Calu3 (cell line): ENCODE measurements at regions of chr4 and their contacts with region 1.

Region 1: GRCh38 chr4:32161382-32161781 is 1441.2 kb downstream of the PCDH7 start:
- DNase-seq: no peak
- H3K4me3 Mint-ChIP-seq: no peak overlapping the region
- H3K27ac Mint-ChIP-seq: no peak overlapping the region
- H3K4me1 Mint-ChIP-seq: no peaks in the 10 kb centered on the region
- H3K27me3 Mint-ChIP-seq: no peaks in the 10 kb centered on the region
- CTCF ChIP-seq: no peak

Region 2: GRCh38 chr4:31964685-31965084 is 196.7 kb before region 1 on chr4:
- CTCF ChIA-PET with region 1: no interaction called
- intact Hi-C with region 1: no loop called
- DNase-seq: no peak
- H3K4me3 Mint-ChIP-seq: no peak overlapping the region
- H3K27ac Mint-ChIP-seq: no peak overlapping the region
- H3K4me1 Mint-ChIP-seq: no peaks in the 10 kb centered on the region
- H3K27me3 Mint-ChIP-seq: no peaks in the 10 kb centered on the region
- CTCF ChIP-seq: no peak

Region 3: GRCh38 chr4:32177891-32178290 is 16.5 kb after region 1 on chr4:
- CTCF ChIA-PET with region 1: no interaction called
- intact Hi-C with region 1: loop called (anchors 1 kb)
- DNase-seq: no peak
- H3K4me3 Mint-ChIP-seq: no peak overlapping the region
- H3K27ac Mint-ChIP-seq: no peak overlapping the region
- H3K4me1 Mint-ChIP-seq: no peaks in the 10 kb centered on the region
- H3K27me3 Mint-ChIP-seq: no peaks in the 10 kb centered on the region
- CTCF ChIP-seq: no peak

Region 4: GRCh38 chr4:32215277-32215676 is 53.9 kb after region 1 on chr4:
- CTCF ChIA-PET with region 1: no interaction called
- intact Hi-C with region 1: no loop called
- DNase-seq: no peak
- H3K4me3 Mint-ChIP-seq: no peak overlapping the region
- H3K27ac Mint-ChIP-seq: no peak overlapping the region
- H3K4me1 Mint-ChIP-seq: no peaks in the 10 kb centered on the region
- H3K27me3 Mint-ChIP-seq: no peaks in the 10 kb centered on the region
- CTCF ChIP-seq: no peak